MCF 10A (cell line): ENCODE measurements at regions of chr7 and their contacts with region 1.

Region 1: GRCh38 chr7:80018941-80019752 is 115.5 kb upstream of the GNAI1 start:
- DNase-seq: peak; percentile 60
- H3K4me3 Mint-ChIP-seq: no peak overlapping the region
- H3K27ac Mint-ChIP-seq: no peak overlapping the region
- H3K4me1 Mint-ChIP-seq: no peaks in the 10 kb centered on the region
- H3K27me3 Mint-ChIP-seq: peaks cover 58% of the 10 kb centered on the region
- CTCF ChIP-seq: peak; percentile 88

Region 2: GRCh38 chr7:79272066-79272669 is 747.0 kb before region 1 on chr7:
- CTCF ChIA-PET with region 1: no interaction called
- POLR2A ChIA-PET with region 1: no interaction called
- intact Hi-C with region 1: loop called (anchors 1 kb)
- DNase-seq: peak; percentile 63
- H3K4me3 Mint-ChIP-seq: no peak overlapping the region
- H3K27ac Mint-ChIP-seq: no peak overlapping the region
- H3K4me1 Mint-ChIP-seq: no peaks in the 10 kb centered on the region
- H3K27me3 Mint-ChIP-seq: peaks cover 10% of the 10 kb centered on the region
- CTCF ChIP-seq: peak; percentile 35

Region 3: GRCh38 chr7:79806161-79806734 is 212.9 kb before region 1 on chr7:
- CTCF ChIA-PET with region 1: no interaction called
- POLR2A ChIA-PET with region 1: no interaction called
- intact Hi-C with region 1: loop called (anchors 1 kb)
- DNase-seq: peak; percentile 9
- H3K4me3 Mint-ChIP-seq: no peak overlapping the region
- H3K27ac Mint-ChIP-seq: no peak overlapping the region
- H3K4me1 Mint-ChIP-seq: no peaks in the 10 kb centered on the region
- H3K27me3 Mint-ChIP-seq: peaks cover 99% of the 10 kb centered on the region
- CTCF ChIP-seq: peak; percentile 36